ENCODE measurements at regions of chr1 and their contacts with region 1.

Region 1: DNA sequence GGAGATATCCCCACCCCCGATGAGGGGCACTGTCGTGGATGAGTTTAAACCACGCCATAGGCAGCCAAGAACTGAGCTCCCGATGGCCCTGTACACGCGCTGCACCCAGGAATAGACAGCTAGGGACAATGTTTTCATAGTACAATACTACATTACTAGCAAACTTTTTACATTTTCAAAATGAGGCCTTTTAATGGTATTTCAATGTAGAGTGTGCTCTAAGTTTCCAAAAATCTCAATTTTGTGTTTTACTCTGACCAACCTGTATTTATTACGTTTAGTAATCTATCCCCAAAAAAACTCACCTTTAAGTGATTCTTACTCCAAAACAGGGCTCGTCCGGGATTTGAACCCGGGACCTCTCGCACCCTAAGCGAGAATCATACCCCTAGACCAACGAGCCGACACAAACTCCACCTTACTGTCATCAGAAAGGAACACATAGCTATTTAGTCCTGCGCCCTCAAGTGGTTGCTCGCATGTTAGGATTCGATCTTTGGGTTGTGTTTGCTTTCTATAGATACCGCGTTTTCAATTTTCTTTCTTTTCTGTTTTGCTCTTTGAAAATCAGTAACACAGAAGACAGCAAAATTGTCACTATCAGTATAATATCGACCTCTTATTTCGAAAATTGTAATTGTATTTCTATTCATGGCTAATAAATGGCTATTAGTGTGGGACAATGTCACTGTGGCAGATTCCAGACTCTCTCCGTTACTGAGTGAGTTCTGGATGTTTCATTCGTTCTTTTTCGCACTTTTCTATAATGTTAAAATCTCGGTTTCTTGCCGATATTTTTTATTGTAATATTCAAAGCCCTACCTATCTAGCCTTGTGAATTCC is 6.4 kb upstream of the MPZL1 start:
- DNase-seq: peak; percentile 87 to 91 (median 88)
- H3K4me3 ChIP-seq: peak overlapping the region; percentile 80 to 87
- H3K4me3 Mint-ChIP-seq: peak overlapping the region; percentile 84 to 98 (median 92)
- H3K27ac ChIP-seq: peak overlapping the region; percentile 39
- H3K27ac Mint-ChIP-seq: peak overlapping the region; percentile 90 to 99 (median 94)
- H3K4me1 ChIP-seq: peaks cover 31% of the 10 kb centered on the region
- H3K4me1 Mint-ChIP-seq: peaks cover 19 to 49% (median 38%) of the 10 kb centered on the region in 4 donors
- H3K27me3 ChIP-seq: no peaks in the 10 kb centered on the region
- H3K27me3 Mint-ChIP-seq: peaks cover 4 to 12% of the 10 kb centered on the region in 2 donors

Region 2: GRCh38 chr1:167553136-167554027 is 162.0 kb before region 1 on chr1 and contains the start of gene CREG1:
- CTCF ChIA-PET with region 1: interaction called, 12 read pairs
- POLR2A ChIA-PET with region 1: no interaction called
- intact Hi-C with region 1: no loop called
- DNase-seq: peak; percentile 85 to 93 (median 87)
- H3K4me3 ChIP-seq: peak within 1 kb of the TSS; percentile 74 to 77
- H3K4me3 Mint-ChIP-seq: peak within 1 kb of the TSS; percentile 87 to 94 (median 90)
- H3K27ac ChIP-seq: peak within 1 kb of the TSS; percentile 41
- H3K27ac Mint-ChIP-seq: peak within 1 kb of the TSS; percentile 36 to 89 (median 84)
- H3K4me1 ChIP-seq: peaks cover 30% of the 10 kb centered on the region
- H3K4me1 Mint-ChIP-seq: peaks cover 23 to 56% (median 39%) of the 10 kb centered on the region in 4 donors
- H3K27me3 ChIP-seq: no peaks in the 10 kb centered on the region
- H3K27me3 Mint-ChIP-seq: peaks cover 0 to 3% of the 10 kb centered on the region in 2 donors
- total RNA-seq, gene CREG1: 21.0 to 21.7 TPM

Region 3: GRCh38 chr1:167635156-167635648 is 80.2 kb before region 1 on chr1:
- CTCF ChIA-PET with region 1: interaction called, 14 read pairs
- POLR2A ChIA-PET with region 1: interaction called, 33 read pairs
- intact Hi-C with region 1: loop called (anchors 1 kb)
- DNase-seq: no peak
- H3K4me3 ChIP-seq: no peak overlapping the region
- H3K4me3 Mint-ChIP-seq: peak overlapping the region in 4 of 8 donors; percentile 16 to 30 (median 23)
- H3K27ac ChIP-seq: no peak overlapping the region
- H3K27ac Mint-ChIP-seq: peak overlapping the region in 4 of 7 donors; percentile 57 to 97 (median 97)
- H3K4me1 ChIP-seq: peaks cover 90% of the 10 kb centered on the region
- H3K4me1 Mint-ChIP-seq: peaks cover 59 to 98% (median 73%) of the 10 kb centered on the region in 4 donors
- H3K27me3 ChIP-seq: no peaks in the 10 kb centered on the region
- H3K27me3 Mint-ChIP-seq: no peaks in the 10 kb centered on the region

Region 4: GRCh38 chr1:167803358-167804207 is 88.2 kb after region 1 on chr1:
- CTCF ChIA-PET with region 1: interaction called, 5 read pairs
- POLR2A ChIA-PET with region 1: interaction called, 7 read pairs
- intact Hi-C with region 1: loop called (anchors 1 kb)
- DNase-seq: peak; percentile 70 to 81 (median 73)
- H3K4me3 ChIP-seq: no peak overlapping the region
- H3K4me3 Mint-ChIP-seq: peak overlapping the region in 7 of 8 donors; percentile 35 to 70 (median 57)
- H3K27ac ChIP-seq: no peak overlapping the region
- H3K27ac Mint-ChIP-seq: peak overlapping the region in 5 of 7 donors; percentile 6 to 87 (median 62)
- H3K4me1 ChIP-seq: peaks cover 26% of the 10 kb centered on the region
- H3K4me1 Mint-ChIP-seq: peaks cover 23 to 34% (median 26%) of the 10 kb centered on the region in 4 donors
- H3K27me3 ChIP-seq: no peaks in the 10 kb centered on the region
- H3K27me3 Mint-ChIP-seq: peaks cover 2% of the 10 kb centered on the region in 2 donors

Region 5: DNA sequence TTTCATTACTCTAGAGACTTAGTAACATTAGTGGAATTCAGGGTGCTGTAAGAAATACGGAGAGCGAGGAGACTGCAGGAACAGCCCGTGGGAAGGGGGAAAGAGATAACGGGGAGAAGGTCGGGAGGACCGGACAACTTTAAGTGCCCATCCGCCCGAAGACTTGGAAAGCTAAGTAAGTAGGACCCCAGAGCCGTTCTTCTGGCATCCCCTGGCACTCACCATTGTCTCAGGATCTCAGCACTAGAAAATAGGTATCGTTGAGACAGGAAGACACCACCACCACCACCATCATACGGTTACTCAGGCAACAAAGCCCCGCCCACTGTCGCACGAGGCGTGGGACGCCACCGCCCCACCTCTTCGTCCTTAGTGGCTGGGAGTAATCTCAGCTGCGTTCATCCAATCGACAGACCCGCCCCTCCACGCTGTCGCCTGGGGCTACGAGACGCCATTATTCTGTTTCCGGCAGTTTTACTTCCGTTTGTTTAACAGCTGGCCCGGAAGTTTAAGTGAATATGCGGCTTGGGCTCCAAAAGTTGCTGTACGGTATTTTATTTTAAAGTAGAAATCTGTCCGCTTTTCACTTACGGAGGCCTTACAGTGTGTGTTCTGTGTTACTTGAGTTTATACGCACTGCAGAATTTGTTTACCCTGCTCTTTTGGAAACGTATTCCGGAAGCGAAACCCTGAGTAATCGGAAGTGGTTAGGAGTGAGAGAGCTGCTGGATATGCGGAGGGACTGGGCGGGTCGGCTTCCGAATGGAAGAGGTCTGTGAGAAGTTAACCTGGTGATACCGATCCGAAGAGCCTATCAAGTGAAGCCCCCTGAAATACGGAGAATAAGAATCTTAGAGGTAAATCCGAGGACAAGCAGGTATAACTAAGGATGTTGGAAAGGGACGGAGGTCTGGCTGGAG is 1652.4 kb after region 1 on chr1 and contains the starts of genes BLZF1 and NME7:
- CTCF ChIA-PET with region 1: no interaction called
- POLR2A ChIA-PET with region 1: no interaction called
- intact Hi-C with region 1: loop called (anchors 10 kb)
- DNase-seq: peak; percentile 95 to 99 (median 98)
- H3K4me3 ChIP-seq: peak within 1 kb of the TSS; percentile 96
- H3K4me3 Mint-ChIP-seq: peak within 1 kb of the TSS in 3 of 8 donors; percentile 16 to 51 (median 24)
- H3K27ac ChIP-seq: peak within 1 kb of the TSS; percentile 71
- H3K27ac Mint-ChIP-seq: peak within 1 kb of the TSS in 3 of 7 donors; percentile 25 to 54 (median 33)
- H3K4me1 ChIP-seq: peaks cover 44% of the 10 kb centered on the region
- H3K4me1 Mint-ChIP-seq: peaks cover 22 to 31% (median 23%) of the 10 kb centered on the region in 4 donors
- H3K27me3 ChIP-seq: no peaks in the 10 kb centered on the region
- H3K27me3 Mint-ChIP-seq: no peaks in the 10 kb centered on the region
- total RNA-seq, gene BLZF1: 20.0 to 23.8 TPM
- total RNA-seq, gene NME7: 12.0 to 14.3 TPM